Left ventricle myocardium inferior (tissue), 1 donor: ENCODE measurements at regions of chr9 and their contacts with region 1.

Region 1: DNA sequence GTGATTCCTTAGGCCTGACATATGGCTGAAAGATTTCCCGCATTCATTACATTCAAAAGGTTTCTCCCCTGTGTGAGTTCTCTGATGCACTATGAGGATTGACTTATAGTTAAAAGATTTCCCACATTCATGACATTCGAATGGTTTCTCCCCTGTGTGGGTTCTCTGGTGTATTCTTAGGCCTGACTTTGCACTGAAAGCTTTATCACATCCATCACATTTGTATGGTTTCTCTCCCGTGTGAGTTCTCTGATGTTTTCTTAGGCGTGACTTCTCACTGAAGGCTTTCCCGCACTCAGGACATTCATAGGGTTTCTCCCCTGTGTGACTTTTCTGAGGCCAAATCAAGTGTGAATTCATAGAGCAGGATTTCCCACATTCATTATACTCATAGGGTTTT is 35.8 kb downstream of the ZNF782 start:
- DNase-seq: no peak
- H3K4me3 ChIP-seq: no peak overlapping the region
- H3K27ac ChIP-seq: no peak overlapping the region
- H3K4me1 ChIP-seq: no peaks in the 10 kb centered on the region
- H3K27me3 ChIP-seq: no peaks in the 10 kb centered on the region
- CTCF ChIP-seq: no peak

Region 2: GRCh38 chr9:96762568-96762967 is 56.0 kb before region 1 on chr9:
- intact Hi-C with region 1: loop called (anchors 10 kb)
- DNase-seq: no peak
- H3K4me3 ChIP-seq: no peak overlapping the region
- H3K27ac ChIP-seq: no peak overlapping the region
- H3K4me1 ChIP-seq: no peaks in the 10 kb centered on the region
- H3K27me3 ChIP-seq: no peaks in the 10 kb centered on the region
- CTCF ChIP-seq: no peak

Region 3: GRCh38 chr9:97038909-97039781 is 220.6 kb after region 1 on chr9 and contains the start of gene CTSV:
- intact Hi-C with region 1: no loop called
- DNase-seq: peak; percentile 85
- H3K4me3 ChIP-seq: peak within 1 kb of the TSS; percentile 76
- H3K27ac ChIP-seq: no peak within 1 kb of the TSS
- H3K4me1 ChIP-seq: peaks cover 14% of the 10 kb centered on the region
- H3K27me3 ChIP-seq: peaks cover 67% of the 10 kb centered on the region
- CTCF ChIP-seq: no peak
- total RNA-seq, gene CTSV: 0.14 TPM